MCF 10A (cell line): ENCODE measurements at regions of chr6 and their contacts with region 1.

Region 1: DNA sequence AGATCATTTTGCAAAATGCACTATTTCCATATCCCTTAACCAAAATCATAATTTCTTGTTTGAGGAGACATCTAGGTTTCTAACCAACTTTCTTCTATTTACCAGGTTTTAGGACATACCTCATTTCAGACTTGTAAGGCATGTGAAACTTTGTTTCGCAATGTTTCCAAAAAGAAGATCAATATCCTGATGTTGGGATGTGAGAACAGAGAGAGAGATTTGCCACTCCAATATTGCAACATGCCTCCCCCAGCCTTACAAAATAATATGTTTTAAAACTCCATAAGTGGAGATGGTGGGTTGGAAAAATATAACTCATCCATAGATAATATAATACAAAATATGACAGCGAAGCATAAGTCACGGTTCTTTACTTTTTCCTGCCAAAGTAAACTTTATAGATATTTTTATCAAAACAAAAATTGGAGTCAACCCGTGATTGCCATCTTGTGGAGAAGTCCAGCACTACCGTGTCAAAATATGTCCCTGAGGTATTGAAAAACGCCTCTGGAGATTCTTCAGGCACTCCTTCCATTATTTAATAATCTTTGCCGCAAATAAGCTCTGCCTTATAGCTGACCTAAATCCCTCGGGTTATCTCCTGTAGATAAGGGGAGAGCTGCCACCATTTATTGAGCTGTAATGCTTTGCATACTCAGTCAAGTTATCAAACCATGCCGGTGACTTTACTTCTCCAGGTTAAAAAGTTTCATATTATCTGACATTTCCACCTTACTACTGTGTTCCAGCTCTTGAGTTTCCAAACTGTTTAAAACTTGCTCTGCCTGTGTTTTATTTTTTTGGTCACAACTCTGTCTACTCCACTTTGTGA is 534.2 kb downstream of the HACE1 start:
- DNase-seq: peak; percentile 72
- H3K4me3 Mint-ChIP-seq: peak overlapping the region; percentile 49
- H3K27ac Mint-ChIP-seq: peak overlapping the region; percentile 77
- H3K4me1 Mint-ChIP-seq: peaks cover 33% of the 10 kb centered on the region
- H3K27me3 Mint-ChIP-seq: no peaks in the 10 kb centered on the region
- CTCF ChIP-seq: peak; percentile 53

Region 2: GRCh38 chr6:102853269-102853955 is 1472.1 kb before region 1 on chr6:
- CTCF ChIA-PET with region 1: interaction called, 4 read pairs
- POLR2A ChIA-PET with region 1: no interaction called
- intact Hi-C with region 1: loop called (anchors 10 kb)
- DNase-seq: no peak
- H3K4me3 Mint-ChIP-seq: no peak overlapping the region
- H3K27ac Mint-ChIP-seq: no peak overlapping the region
- H3K4me1 Mint-ChIP-seq: peaks cover 13% of the 10 kb centered on the region
- H3K27me3 Mint-ChIP-seq: no peaks in the 10 kb centered on the region
- CTCF ChIP-seq: no peak

Region 3: GRCh38 chr6:103672169-103672568 is 653.4 kb before region 1 on chr6:
- CTCF ChIA-PET with region 1: interaction called, 3 read pairs
- POLR2A ChIA-PET with region 1: no interaction called
- intact Hi-C with region 1: loop called (anchors 10 kb)
- DNase-seq: peak; percentile 41
- H3K4me3 Mint-ChIP-seq: no peak overlapping the region
- H3K27ac Mint-ChIP-seq: no peak overlapping the region
- H3K4me1 Mint-ChIP-seq: peaks cover 9% of the 10 kb centered on the region
- H3K27me3 Mint-ChIP-seq: peaks cover 38% of the 10 kb centered on the region
- CTCF ChIP-seq: peak; percentile 24

Region 4: DNA sequence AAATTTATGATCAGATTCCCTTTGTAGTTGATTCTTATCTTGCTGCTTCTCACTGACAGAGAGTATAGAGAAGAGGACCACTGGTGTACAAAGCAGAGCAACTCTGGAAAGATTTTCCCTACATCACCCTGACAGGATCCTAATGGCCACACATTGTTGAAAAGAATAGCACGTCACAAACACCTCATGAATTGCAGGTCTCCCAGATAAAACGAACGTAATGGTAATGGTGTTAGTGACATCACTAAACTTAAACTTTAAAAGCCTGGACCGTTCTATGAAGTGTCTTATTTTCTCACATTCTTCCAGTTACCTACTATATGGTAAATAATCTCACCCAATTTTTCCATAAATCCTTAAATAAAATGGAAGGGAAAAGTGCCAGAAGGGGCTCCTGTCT is 482.9 kb before region 1 on chr6:
- CTCF ChIA-PET with region 1: interaction called, 3 read pairs
- POLR2A ChIA-PET with region 1: no interaction called
- intact Hi-C with region 1: loop called (anchors 10 kb)
- DNase-seq: no peak
- H3K4me3 Mint-ChIP-seq: no peak overlapping the region
- H3K27ac Mint-ChIP-seq: no peak overlapping the region
- H3K4me1 Mint-ChIP-seq: no peaks in the 10 kb centered on the region
- H3K27me3 Mint-ChIP-seq: peaks cover 74% of the 10 kb centered on the region
- CTCF ChIP-seq: no peak

Region 5: GRCh38 chr6:104483225-104483834 is 157.8 kb after region 1 on chr6:
- CTCF ChIA-PET with region 1: no interaction called
- POLR2A ChIA-PET with region 1: no interaction called
- intact Hi-C with region 1: loop called (anchors 5 kb)
- DNase-seq: peak; percentile 47
- H3K4me3 Mint-ChIP-seq: no peak overlapping the region
- H3K27ac Mint-ChIP-seq: no peak overlapping the region
- H3K4me1 Mint-ChIP-seq: no peaks in the 10 kb centered on the region
- H3K27me3 Mint-ChIP-seq: no peaks in the 10 kb centered on the region
- CTCF ChIP-seq: peak; percentile 54

Region 6: GRCh38 chr6:104771258-104771832 is 445.8 kb after region 1 on chr6:
- CTCF ChIA-PET with region 1: interaction called, 4 read pairs
- POLR2A ChIA-PET with region 1: interaction called, 3 read pairs
- intact Hi-C with region 1: loop called (anchors 5 kb)
- DNase-seq: peak; percentile 40
- H3K4me3 Mint-ChIP-seq: no peak overlapping the region
- H3K27ac Mint-ChIP-seq: no peak overlapping the region
- H3K4me1 Mint-ChIP-seq: peaks cover 5% of the 10 kb centered on the region
- H3K27me3 Mint-ChIP-seq: no peaks in the 10 kb centered on the region
- CTCF ChIP-seq: peak; percentile 60